ENCODE measurements at regions of chr2 and their contacts with region 1.

Region 1: GRCh38 chr2:190036071-190036470 is 26.5 kb downstream of the MSTN start:
- DNase-seq: no peak
- H3K4me3 ChIP-seq: no peak overlapping the region
- H3K27me3 ChIP-seq: no peaks in the 10 kb centered on the region
- CTCF ChIP-seq: no peak

Region 2: DNA sequence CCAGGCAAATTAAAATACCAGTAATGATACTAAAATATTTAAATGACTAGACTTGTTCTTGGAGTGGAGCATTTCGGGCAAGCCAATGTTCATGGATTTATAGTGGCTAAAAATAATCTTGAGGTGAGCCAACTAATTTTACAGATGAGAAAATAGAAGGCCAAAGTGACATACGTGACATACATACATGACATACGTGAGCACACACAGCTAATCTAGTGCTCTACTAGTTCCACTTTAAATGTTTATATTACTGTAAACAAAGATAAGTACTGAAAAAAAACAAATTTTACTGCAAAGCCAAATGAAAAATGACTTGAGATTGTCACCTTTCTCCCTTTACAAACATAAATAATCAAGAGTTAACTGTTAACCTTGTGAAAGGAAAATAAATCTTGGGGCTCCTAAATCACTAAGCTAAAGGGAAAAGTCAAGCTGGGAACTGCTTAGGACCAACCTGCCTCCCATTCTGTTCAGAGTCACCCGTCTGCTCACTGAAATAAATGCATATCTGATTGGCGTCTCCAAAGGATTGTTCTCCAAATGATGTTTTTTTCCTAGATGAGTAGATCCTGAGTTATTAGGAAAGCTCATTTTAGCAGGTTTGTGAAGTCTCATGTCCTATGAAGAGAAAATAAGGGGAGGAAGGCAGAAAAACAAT is 155.1 kb before region 1 on chr2:
- CTCF ChIA-PET with region 1: no interaction called
- POLR2A ChIA-PET with region 1: no interaction called
- DNase-seq: no peak
- H3K4me3 ChIP-seq: no peak overlapping the region
- H3K27me3 ChIP-seq: no peaks in the 10 kb centered on the region
- CTCF ChIP-seq: no peak

Region 3: GRCh38 chr2:190023861-190024260 is 12.2 kb before region 1 on chr2:
- CTCF ChIA-PET with region 1: interaction called, 14 read pairs
- POLR2A ChIA-PET with region 1: no interaction called
- DNase-seq: no peak
- H3K4me3 ChIP-seq: no peak overlapping the region
- H3K27me3 ChIP-seq: no peaks in the 10 kb centered on the region
- CTCF ChIP-seq: peak; percentile 39

Region 4: DNA sequence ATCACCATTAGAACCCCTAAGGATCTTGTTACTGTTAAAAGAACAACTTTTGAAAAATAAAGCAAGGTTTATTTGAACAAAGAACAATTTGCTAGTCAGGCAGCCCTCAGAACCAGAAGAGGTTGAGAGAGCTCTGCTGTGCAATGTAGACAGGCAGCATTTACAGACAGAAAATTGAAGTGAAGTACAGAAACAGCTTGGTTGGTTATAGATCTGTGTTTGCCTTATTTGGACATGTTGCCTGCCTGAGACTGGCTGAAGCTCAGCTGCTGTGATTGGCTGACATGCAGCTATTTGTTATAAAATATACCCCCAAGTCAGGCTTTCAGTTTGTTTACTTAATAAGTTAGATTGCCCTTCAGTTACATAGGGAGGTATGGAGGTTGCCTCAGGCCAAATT is 13.9 kb after region 1 on chr2:
- CTCF ChIA-PET with region 1: no interaction called
- POLR2A ChIA-PET with region 1: no interaction called
- DNase-seq: no peak
- H3K4me3 ChIP-seq: no peak overlapping the region
- H3K27me3 ChIP-seq: no peaks in the 10 kb centered on the region
- CTCF ChIP-seq: no peak

Region 5: DNA sequence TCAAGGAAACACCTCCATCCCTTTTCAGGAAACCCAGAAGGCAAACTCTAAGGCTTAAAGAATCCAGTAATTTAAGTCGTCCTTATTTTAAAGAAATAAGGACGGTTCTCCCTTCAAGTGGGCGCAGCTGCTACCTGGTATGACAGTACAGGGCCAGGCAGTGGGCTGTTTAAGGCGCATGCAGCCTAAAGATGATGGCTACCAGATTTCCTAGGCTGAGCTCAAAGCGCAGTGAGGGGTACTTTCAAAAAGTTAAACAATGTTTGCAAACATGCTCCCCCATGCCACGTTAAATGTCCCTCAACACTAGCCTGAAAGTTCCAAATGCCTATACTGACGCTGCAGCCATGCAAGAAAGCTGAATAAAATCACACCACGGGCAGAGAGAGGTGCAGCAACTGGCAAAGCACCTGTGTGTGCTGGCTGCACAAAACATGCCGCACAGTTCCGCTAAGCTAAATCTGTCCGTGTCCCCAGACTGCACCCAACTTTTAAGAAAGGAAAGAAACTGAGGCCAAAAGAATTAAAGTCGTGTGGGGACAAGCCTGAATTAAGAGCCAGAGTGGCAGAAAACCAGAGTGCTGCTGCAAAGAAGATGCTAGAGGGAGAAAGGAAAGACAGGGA is 283.0 kb after region 1 on chr2:
- CTCF ChIA-PET with region 1: no interaction called
- POLR2A ChIA-PET with region 1: no interaction called
- DNase-seq: no peak
- H3K4me3 ChIP-seq: peak overlapping the region; percentile 81
- H3K27me3 ChIP-seq: no peaks in the 10 kb centered on the region
- CTCF ChIP-seq: no peak